Prostate gland (tissue), 2 donors: ENCODE measurements at regions of chr4 and their contacts with region 1.

Region 1: GRCh38 chr4:76179398-76180318 is 31.5 kb upstream of the NUP54 start:
- DNase-seq: peak; percentile 86
- H3K4me3 ChIP-seq: no peak overlapping the region
- H3K27ac ChIP-seq: no peak overlapping the region
- H3K4me1 ChIP-seq: no peaks in the 10 kb centered on the region
- H3K27me3 ChIP-seq: no peaks in the 10 kb centered on the region
- CTCF ChIP-seq: peak; percentile 81 to 97 (median 88)
- POLR2A ChIP-seq: no peak

Region 2: GRCh38 chr4:76420762-76421581 is 241.3 kb after region 1 on chr4 and contains the start of gene CCDC158:
- intact Hi-C with region 1: loop called (anchors 5 kb)
- DNase-seq: no peak
- H3K4me3 ChIP-seq: peak within 1 kb of the TSS; percentile 39 to 47
- H3K27ac ChIP-seq: peak within 1 kb of the TSS in 1 of 2 donors; percentile 23
- H3K4me1 ChIP-seq: no peaks in the 10 kb centered on the region
- H3K27me3 ChIP-seq: no peaks in the 10 kb centered on the region
- CTCF ChIP-seq: no peak
- POLR2A ChIP-seq: no peak
- total RNA-seq, gene CCDC158: 4.9 TPM in 1 of 2 donors, not detected in the other

Region 3: DNA sequence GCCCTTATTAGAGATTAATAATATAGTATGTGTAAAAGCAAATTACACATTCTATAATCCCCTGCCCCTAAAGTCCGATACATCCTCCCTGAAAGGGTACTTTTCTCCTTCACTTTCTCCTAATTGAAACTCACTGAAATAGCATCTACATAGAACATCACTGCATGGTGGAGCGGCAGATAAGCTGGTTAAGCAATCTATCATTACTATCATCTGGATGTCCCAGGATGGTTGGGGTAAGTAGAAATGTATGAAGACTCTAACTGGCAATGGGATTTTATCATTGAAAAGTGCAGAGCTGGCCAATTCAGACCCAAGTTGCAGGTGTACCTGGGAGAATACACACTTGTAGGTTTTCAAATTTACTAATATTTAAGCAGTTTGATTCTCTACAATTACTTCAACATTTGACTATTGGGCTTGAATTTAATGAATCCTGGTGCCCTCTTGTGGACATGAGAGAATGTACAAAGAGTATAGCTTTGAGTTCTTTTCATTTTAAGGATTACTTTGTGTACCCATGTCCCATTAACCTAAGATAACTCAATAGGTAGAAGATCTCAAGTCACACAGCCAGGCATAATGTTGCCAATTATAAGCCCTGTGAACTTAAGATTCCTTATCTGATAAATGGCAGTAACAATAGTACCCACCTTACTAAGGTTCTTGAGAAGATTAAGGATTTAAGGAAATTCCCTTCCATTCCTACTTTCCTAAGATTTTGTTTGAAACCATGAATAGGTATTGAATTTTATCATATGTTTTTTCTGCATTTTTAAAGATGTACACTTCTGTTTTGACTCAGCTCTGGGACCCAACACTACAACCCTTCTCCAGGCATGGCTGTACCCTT is 325.2 kb after region 1 on chr4:
- intact Hi-C with region 1: loop called (anchors 10 kb)
- DNase-seq: peak; percentile 28
- H3K4me3 ChIP-seq: no peak overlapping the region
- H3K27ac ChIP-seq: no peak overlapping the region
- H3K4me1 ChIP-seq: no peaks in the 10 kb centered on the region
- H3K27me3 ChIP-seq: no peaks in the 10 kb centered on the region
- CTCF ChIP-seq: peak; percentile 39 to 80 (median 64)
- POLR2A ChIP-seq: no peak